Activated CD4-positive, alpha-beta T cell treated with anti-CD3 and anti-CD28 coated beads, Interleukin-2, amount 10 ng/mL, durations not matched to agents 24 days and 14 days (primary cell): ENCODE measurements at regions of chr20 and their contacts with region 1.

Region 1: GRCh38 chr20:53708129-53708968 is 114.7 kb upstream of the ZNF217 start:
- DNase-seq: peak; percentile 84
- H3K4me3 Mint-ChIP-seq: peak overlapping the region; percentile 57
- H3K27ac Mint-ChIP-seq: peak overlapping the region; percentile 93
- H3K4me1 Mint-ChIP-seq: peaks cover 52% of the 10 kb centered on the region
- H3K27me3 Mint-ChIP-seq: no peaks in the 10 kb centered on the region

Region 2: DNA sequence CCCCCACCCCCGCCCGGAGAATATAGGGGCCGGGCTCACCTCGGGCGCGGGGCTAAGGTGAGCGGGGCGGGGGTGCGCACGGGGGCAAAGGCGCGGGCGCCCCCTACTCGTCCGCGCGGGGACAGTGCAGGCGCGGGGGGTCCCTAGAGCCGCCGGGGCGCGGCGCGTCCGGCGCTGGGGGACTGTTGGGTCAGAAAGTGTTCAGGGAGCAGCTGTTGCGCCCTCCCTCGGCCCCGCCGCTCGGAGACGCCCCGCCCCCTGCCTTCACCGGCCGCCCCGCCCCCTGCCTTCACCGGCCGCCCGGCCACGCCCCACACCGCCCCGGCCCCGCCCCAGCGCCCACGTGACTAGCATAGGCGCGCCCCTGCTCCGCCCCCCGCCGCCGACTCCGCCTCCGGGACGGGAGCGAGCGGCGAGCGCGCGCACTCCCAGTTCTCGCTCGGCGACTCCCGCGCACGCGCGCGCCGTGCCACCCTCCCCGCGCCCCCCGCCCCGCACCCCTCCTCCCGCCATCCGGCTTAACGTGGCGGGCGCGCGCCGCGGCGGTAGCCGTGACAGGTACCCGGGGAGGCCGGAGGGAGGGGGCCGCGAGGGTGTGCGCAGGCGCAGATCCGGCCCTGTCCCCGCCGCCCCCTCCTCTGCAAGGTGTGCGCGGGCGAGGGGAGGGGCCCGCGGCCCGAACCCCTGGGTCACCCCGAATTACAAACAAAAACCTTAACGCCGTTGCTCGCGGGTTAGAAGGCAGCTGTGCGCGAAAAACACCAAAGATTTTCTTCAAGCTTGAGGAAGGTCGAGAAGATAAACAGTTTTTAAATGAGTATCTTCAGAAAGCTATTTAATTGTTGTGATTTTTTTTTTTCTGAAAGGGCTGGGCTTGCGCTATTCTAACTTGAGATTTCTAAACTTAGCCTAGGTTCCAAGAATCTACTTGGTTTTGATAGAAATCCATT is 114.0 kb before region 1 on chr20:
- intact Hi-C with region 1: loop called (anchors 5 kb)
- DNase-seq: peak; percentile 99
- H3K4me3 Mint-ChIP-seq: peak overlapping the region; percentile 86
- H3K27ac Mint-ChIP-seq: peak overlapping the region; percentile 93
- H3K4me1 Mint-ChIP-seq: peaks cover 45% of the 10 kb centered on the region
- H3K27me3 Mint-ChIP-seq: no peaks in the 10 kb centered on the region

Region 3: GRCh38 chr20:53660078-53660909 is 48.1 kb before region 1 on chr20:
- intact Hi-C with region 1: loop called (anchors 1 kb)
- DNase-seq: peak; percentile 82
- H3K4me3 Mint-ChIP-seq: peak overlapping the region; percentile 84
- H3K27ac Mint-ChIP-seq: peak overlapping the region; percentile 93
- H3K4me1 Mint-ChIP-seq: peaks cover 54% of the 10 kb centered on the region
- H3K27me3 Mint-ChIP-seq: no peaks in the 10 kb centered on the region

Region 4: GRCh38 chr20:53734006-53734688 is 25.8 kb after region 1 on chr20:
- intact Hi-C with region 1: loop called (anchors 1 kb)
- DNase-seq: no peak
- H3K4me3 Mint-ChIP-seq: no peak overlapping the region
- H3K27ac Mint-ChIP-seq: no peak overlapping the region
- H3K4me1 Mint-ChIP-seq: peaks cover 47% of the 10 kb centered on the region
- H3K27me3 Mint-ChIP-seq: no peaks in the 10 kb centered on the region

Region 5: GRCh38 chr20:53839423-53840176 is 131.3 kb after region 1 on chr20:
- intact Hi-C with region 1: loop called (anchors 5 kb)
- DNase-seq: peak; percentile 88
- H3K4me3 Mint-ChIP-seq: peak overlapping the region; percentile 85
- H3K27ac Mint-ChIP-seq: peak overlapping the region; percentile 98
- H3K4me1 Mint-ChIP-seq: peaks cover 58% of the 10 kb centered on the region
- H3K27me3 Mint-ChIP-seq: no peaks in the 10 kb centered on the region

Region 6: GRCh38 chr20:53852019-53852418 is 143.7 kb after region 1 on chr20:
- intact Hi-C with region 1: no loop called
- DNase-seq: no peak
- H3K4me3 Mint-ChIP-seq: no peak overlapping the region
- H3K27ac Mint-ChIP-seq: no peak overlapping the region
- H3K4me1 Mint-ChIP-seq: peaks cover 39% of the 10 kb centered on the region
- H3K27me3 Mint-ChIP-seq: no peaks in the 10 kb centered on the region

Region 7: GRCh38 chr20:53915446-53916172 is 207.3 kb after region 1 on chr20:
- intact Hi-C with region 1: loop called (anchors 2 kb)
- DNase-seq: peak; percentile 97
- H3K4me3 Mint-ChIP-seq: peak overlapping the region; percentile 93
- H3K27ac Mint-ChIP-seq: peak overlapping the region; percentile 91
- H3K4me1 Mint-ChIP-seq: peaks cover 37% of the 10 kb centered on the region
- H3K27me3 Mint-ChIP-seq: no peaks in the 10 kb centered on the region